ENCODE measurements at regions of chr10 and their contacts with region 1.

Region 1: DNA sequence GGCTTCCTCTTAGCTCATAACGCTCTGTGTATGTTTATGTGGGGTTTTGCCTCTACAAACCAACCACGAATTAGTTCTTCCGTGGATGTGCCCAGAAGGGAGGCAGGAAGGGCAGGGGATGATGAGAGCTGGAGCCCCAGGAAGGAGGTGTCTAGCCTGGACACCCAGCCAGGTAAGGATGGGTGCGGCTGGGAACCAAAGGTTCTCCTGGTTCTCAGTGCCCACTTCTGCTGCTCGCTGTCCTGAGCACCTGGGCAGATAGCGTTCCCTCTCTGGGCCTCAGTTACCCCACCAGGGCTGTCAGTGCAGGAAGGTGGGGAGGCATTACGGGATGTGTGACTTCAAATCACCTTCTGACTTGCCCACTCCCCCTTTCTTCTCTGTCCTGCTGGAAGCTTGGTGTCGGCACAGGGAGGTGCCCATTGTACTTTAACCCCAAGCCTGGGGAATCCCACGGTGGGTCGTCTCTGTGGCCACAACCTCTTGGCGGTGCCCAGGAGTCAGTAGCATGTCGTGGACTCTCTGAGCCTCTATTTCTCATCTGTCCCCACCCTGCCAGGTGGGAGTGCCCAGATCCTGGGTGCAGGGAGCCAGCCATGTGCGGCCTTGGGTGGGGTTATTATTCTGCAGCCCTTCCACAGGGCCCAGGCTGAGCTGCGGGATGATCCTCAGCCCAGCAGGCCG is 18.7 kb upstream of the PCBD1 start:
- DNase-seq: peak; percentile 57

Region 2: GRCh38 chr10:71671994-71672946 is 765.2 kb after region 1 on chr10:
- intact Hi-C with region 1: no loop called
- DNase-seq: no peak

Region 3: GRCh38 chr10:71909399-71910083 is 1002.4 kb after region 1 on chr10:
- intact Hi-C with region 1: loop called in 1 of 2 experiments (anchors 5 kb)
- DNase-seq: no peak